MCF 10A (cell line): ENCODE measurements at regions of chr11 and their contacts with region 1.

Region 1: DNA sequence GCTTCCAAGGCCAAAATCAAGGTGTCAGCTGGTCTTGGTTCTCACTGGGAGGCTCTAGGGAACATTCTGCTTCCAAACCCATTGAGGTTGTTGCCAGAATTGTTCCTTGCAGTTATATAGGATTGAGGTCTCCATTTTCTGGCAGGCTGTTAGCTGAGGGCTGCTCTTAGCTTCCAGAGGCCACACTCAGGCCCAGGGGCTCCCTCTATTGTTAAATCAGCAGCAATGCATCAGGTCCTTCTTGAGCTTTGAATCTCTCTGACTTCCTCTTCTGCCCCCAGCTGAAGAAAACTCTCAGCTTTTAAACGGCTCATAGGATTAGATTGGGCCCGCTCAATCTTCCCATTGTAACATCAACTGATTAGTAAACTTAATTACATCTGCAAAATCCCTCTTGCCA is 39.3 kb upstream of the BSX start:
- DNase-seq: peak; percentile 63
- H3K4me3 Mint-ChIP-seq: no peak overlapping the region
- H3K27ac Mint-ChIP-seq: no peak overlapping the region
- H3K4me1 Mint-ChIP-seq: no peaks in the 10 kb centered on the region
- H3K27me3 Mint-ChIP-seq: peaks cover 37% of the 10 kb centered on the region
- CTCF ChIP-seq: peak; percentile 51

Region 2: DNA sequence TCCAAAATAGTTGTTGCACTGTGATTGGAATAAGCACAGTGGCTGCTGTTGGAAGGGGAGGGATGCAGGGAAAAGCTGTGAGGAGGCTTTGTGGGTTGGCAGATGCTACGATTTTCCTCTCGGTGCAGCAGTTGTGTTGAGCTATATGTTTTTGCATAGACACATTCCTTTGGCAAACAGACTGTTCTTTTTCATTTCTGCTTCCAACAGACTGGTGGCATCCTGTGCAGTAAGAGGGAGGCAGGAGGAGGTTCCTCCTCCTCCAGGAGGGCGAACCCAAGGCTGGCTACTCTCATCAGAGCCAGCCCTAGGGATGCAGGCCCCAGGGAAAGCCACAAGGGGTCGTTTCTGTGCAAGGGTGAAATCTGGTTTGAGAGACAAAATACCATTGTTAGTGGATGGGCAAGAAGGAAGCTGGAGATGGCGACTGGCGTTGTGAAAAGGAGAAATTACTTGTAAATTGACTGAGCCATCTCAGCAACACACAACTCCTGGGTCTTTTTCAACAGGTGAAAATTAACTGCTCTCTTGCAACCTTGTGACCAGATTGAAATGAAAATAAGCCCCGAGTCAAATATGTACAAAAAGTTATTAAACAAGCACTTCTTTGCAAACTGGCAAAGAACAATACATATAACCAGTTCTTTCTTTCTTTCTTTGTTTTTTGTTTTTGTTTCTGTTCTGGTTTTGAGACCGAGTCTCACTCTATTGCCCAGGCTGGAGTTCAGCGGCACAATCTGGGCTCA is 392.0 kb before region 1 on chr11:
- CTCF ChIA-PET with region 1: interaction called, 4 read pairs
- POLR2A ChIA-PET with region 1: no interaction called
- intact Hi-C with region 1: loop called (anchors 5 kb)
- DNase-seq: peak; percentile 82
- H3K4me3 Mint-ChIP-seq: no peak overlapping the region
- H3K27ac Mint-ChIP-seq: no peak overlapping the region
- H3K4me1 Mint-ChIP-seq: peaks cover 18% of the 10 kb centered on the region
- H3K27me3 Mint-ChIP-seq: no peaks in the 10 kb centered on the region
- CTCF ChIP-seq: peak; percentile 83

Region 3: GRCh38 chr11:122832721-122833470 is 188.1 kb before region 1 on chr11:
- CTCF ChIA-PET with region 1: no interaction called
- POLR2A ChIA-PET with region 1: no interaction called
- intact Hi-C with region 1: no loop called
- DNase-seq: no peak
- H3K4me3 Mint-ChIP-seq: no peak overlapping the region
- H3K27ac Mint-ChIP-seq: no peak overlapping the region
- H3K4me1 Mint-ChIP-seq: peaks cover 16% of the 10 kb centered on the region
- H3K27me3 Mint-ChIP-seq: no peaks in the 10 kb centered on the region
- CTCF ChIP-seq: no peak

Region 4: GRCh38 chr11:122853971-122854446 is 167.0 kb before region 1 on chr11:
- CTCF ChIA-PET with region 1: interaction called, 294 read pairs
- POLR2A ChIA-PET with region 1: no interaction called
- intact Hi-C with region 1: no loop called
- DNase-seq: peak; percentile 81
- H3K4me3 Mint-ChIP-seq: no peak overlapping the region
- H3K27ac Mint-ChIP-seq: no peak overlapping the region
- H3K4me1 Mint-ChIP-seq: peaks cover 20% of the 10 kb centered on the region
- H3K27me3 Mint-ChIP-seq: no peaks in the 10 kb centered on the region
- CTCF ChIP-seq: peak; percentile 57

Region 5: GRCh38 chr11:122910775-122911174 is 110.2 kb before region 1 on chr11:
- CTCF ChIA-PET with region 1: interaction called, 12 read pairs
- POLR2A ChIA-PET with region 1: no interaction called
- intact Hi-C with region 1: loop called (anchors 1 kb)
- DNase-seq: peak; percentile 31
- H3K4me3 Mint-ChIP-seq: no peak overlapping the region
- H3K27ac Mint-ChIP-seq: no peak overlapping the region
- H3K4me1 Mint-ChIP-seq: no peaks in the 10 kb centered on the region
- H3K27me3 Mint-ChIP-seq: no peaks in the 10 kb centered on the region
- CTCF ChIP-seq: peak; percentile 41

Region 6: GRCh38 chr11:123046473-123047259 is 25.7 kb after region 1 on chr11:
- CTCF ChIA-PET with region 1: interaction called, 67 read pairs
- POLR2A ChIA-PET with region 1: no interaction called
- intact Hi-C with region 1: no loop called
- DNase-seq: no peak
- H3K4me3 Mint-ChIP-seq: no peak overlapping the region
- H3K27ac Mint-ChIP-seq: no peak overlapping the region
- H3K4me1 Mint-ChIP-seq: peaks cover 5% of the 10 kb centered on the region
- H3K27me3 Mint-ChIP-seq: no peaks in the 10 kb centered on the region
- CTCF ChIP-seq: no peak

Region 7: DNA sequence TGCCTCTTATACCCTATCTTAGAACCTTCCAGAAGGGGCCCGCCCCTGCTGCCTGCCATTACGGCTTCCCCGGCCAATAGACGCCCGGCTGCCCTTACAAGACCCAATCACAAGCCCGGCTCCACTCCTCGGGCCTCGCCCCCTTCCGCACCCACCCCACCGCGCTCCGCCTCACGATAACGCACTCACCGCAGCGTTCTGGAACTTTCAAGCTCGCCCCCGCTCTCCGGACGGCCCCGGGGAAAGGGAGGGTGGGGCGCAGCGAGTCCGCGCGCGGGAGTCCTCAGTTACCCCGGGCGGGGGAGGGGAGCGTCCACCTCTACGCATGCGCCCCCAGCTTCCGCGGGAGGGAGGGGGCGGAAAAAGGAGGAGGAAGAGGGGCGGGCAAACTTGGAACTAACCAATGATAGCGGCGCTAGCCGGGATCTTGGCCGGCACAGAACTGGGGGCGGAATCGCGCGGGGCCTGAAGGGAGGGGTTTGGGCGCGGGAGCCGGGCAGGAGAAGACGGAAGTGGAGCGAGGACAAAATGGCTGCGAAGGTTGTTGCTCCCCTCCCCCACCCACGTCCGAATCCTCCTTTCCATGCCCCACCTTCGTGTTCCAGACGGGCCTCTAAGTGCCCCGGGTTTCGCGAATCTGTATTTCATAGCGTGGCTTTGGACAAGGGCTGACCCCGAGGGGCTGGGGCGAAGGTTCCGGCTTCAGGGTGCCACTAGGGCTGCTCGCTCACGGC is 41.4 kb after region 1 on chr11:
- CTCF ChIA-PET with region 1: interaction called, 12 read pairs
- POLR2A ChIA-PET with region 1: interaction called, 3 read pairs
- intact Hi-C with region 1: no loop called
- DNase-seq: peak; percentile 99
- H3K4me3 Mint-ChIP-seq: peak overlapping the region; percentile 97
- H3K27ac Mint-ChIP-seq: peak overlapping the region; percentile 99
- H3K4me1 Mint-ChIP-seq: peaks cover 46% of the 10 kb centered on the region
- H3K27me3 Mint-ChIP-seq: no peaks in the 10 kb centered on the region
- CTCF ChIP-seq: no peak